Spleen (tissue), 13 donors: ENCODE measurements at regions of chr2 and their contacts with region 1.

Region 1: GRCh38 chr2:55718165-55719008 is 24.7 kb upstream of the PNPT1 start:
- DNase-seq: no peak
- H3K4me3 ChIP-seq: no peak overlapping the region
- H3K27ac ChIP-seq: no peak overlapping the region
- H3K4me1 ChIP-seq: peaks cover 0 to 4% (median 0%) of the 10 kb centered on the region in 6 donors
- H3K27me3 ChIP-seq: no peaks in the 10 kb centered on the region
- CTCF ChIP-seq: peak; percentile 37 to 83 (median 77)
- POLR2A ChIP-seq: no peak

Region 2: GRCh38 chr2:55961318-55961911 is 243.0 kb after region 1 on chr2:
- intact Hi-C with region 1: loop called (anchors 5 kb)
- DNase-seq: no peak
- H3K4me3 ChIP-seq: no peak overlapping the region
- H3K27ac ChIP-seq: no peak overlapping the region
- H3K4me1 ChIP-seq: peaks cover 0 to 12% (median 2%) of the 10 kb centered on the region in 6 donors
- H3K27me3 ChIP-seq: no peaks in the 10 kb centered on the region
- CTCF ChIP-seq: peak in 8 of 11 experiments; percentile 12 to 56 (median 38)
- POLR2A ChIP-seq: no peak

Region 3: DNA sequence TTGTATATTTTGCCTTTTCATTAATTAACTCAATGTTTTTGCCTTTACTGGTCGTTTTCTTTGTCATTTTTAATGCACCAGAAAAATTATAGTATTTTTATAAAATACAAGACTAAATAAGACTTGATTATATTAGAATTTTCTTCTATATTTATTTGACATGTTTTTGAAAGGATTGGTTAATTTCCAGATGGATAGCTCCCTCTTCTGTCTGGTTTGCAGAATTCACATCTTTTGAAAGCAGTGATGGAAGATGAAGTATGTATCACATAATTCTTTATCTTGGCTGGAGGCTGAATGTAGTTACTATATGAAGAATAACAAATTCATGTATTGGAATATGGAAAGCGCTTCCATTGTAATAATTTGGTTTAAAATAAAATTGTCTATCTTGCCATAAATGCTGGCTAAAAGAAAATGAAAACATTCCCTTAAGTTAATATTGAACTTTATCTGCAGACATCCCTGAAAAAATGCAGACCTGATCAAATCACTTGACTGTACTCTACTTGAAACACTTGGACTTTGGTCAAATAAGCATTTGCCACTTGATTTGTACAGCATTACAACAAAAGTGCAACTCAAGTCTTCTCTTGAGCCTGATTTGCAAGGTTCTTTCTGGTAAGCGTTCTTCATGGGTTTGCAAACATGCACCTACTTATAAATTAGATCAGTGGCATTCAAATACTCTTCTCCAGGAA is 291.5 kb after region 1 on chr2:
- intact Hi-C with region 1: loop called (anchors 5 kb)
- DNase-seq: no peak
- H3K4me3 ChIP-seq: no peak overlapping the region
- H3K27ac ChIP-seq: no peak overlapping the region
- H3K4me1 ChIP-seq: peaks cover 0 to 11% (median 6%) of the 10 kb centered on the region in 6 donors
- H3K27me3 ChIP-seq: peaks cover 0 to 9% (median 0%) of the 10 kb centered on the region in 7 donors
- CTCF ChIP-seq: peak in 10 of 11 experiments; percentile 11 to 64 (median 45)
- POLR2A ChIP-seq: no peak

Region 4: GRCh38 chr2:56132138-56132537 is 413.8 kb after region 1 on chr2:
- intact Hi-C with region 1: loop called (anchors 10 kb)
- DNase-seq: no peak
- H3K4me3 ChIP-seq: no peak overlapping the region
- H3K27ac ChIP-seq: no peak overlapping the region
- H3K4me1 ChIP-seq: no peaks in the 10 kb centered on the region
- H3K27me3 ChIP-seq: no peaks in the 10 kb centered on the region
- CTCF ChIP-seq: peak in 9 of 11 experiments; percentile 10 to 45 (median 29)
- POLR2A ChIP-seq: no peak